ENCODE measurements at regions of chr6 and their contacts with region 1.

Region 1: DNA sequence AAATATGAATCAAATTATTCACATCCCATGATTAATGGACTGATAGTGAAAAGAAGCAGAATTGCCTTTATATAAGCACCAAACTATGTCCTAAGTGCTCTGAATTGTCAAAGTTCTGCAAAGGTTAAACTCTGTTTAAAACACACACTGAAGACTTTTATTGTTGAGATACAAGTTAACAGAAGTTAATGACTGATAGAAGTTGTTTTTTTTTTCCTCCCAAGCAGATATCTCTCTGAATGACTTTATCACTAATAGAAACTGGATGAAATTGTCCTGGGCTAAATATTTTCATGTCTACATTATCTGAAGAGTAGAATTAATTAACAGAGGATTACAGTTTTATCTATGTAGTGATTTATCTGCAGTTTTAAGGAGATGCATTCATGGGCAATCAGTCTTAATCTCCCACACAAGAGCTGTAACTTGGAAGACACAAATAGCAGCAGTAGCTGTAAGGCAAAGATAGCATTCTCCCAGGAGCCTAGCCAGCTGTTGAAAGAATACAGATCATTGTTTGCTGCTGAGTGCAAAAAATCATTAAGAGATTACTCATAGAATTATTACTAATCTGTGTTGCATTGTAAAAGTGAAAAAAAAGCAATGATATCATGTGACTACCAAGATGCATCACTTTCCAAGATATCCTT is 49.9 kb downstream of the BMP5 start:
- DNase-seq: peak; percentile 12 to 32
- H3K4me3 ChIP-seq: no peak overlapping the region
- H3K4me3 Mint-ChIP-seq: no peak overlapping the region
- H3K27ac Mint-ChIP-seq: no peak overlapping the region
- H3K4me1 ChIP-seq: peaks cover 28% of the 10 kb centered on the region
- H3K4me1 Mint-ChIP-seq: peaks cover 14% of the 10 kb centered on the region
- H3K27me3 ChIP-seq: no peaks in the 10 kb centered on the region
- H3K27me3 Mint-ChIP-seq: no peaks in the 10 kb centered on the region
- CTCF ChIP-seq: no peak

Region 2: DNA sequence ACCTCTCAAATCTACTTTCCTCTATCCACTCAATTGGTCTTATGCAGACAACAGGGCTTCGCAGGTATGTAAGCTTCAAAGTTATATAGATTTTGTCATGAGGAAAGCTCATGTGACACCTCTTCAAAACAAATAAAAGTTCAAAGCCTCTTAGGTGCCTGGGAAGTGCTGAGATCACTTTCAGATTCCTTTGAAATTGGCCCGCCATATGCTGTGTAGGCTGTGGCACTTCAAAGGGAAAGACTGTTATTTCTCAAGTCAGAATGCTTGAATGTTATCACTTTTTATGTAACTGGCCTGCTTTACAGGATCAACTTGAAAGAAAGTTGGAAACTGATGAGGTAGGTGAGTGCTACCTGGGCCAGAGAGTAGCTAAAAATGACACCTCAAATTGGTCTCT is 565.3 kb before region 1 on chr6:
- CTCF ChIA-PET with region 1: no interaction called
- POLR2A ChIA-PET with region 1: no interaction called
- intact Hi-C with region 1: loop called (anchors 5 kb)
- DNase-seq: peak; percentile 76 to 78
- H3K4me3 ChIP-seq: no peak overlapping the region
- H3K4me3 Mint-ChIP-seq: peak overlapping the region; percentile 47
- H3K27ac Mint-ChIP-seq: peak overlapping the region; percentile 78
- H3K4me1 ChIP-seq: peaks cover 41% of the 10 kb centered on the region
- H3K4me1 Mint-ChIP-seq: peaks cover 10% of the 10 kb centered on the region
- H3K27me3 ChIP-seq: no peaks in the 10 kb centered on the region
- H3K27me3 Mint-ChIP-seq: no peaks in the 10 kb centered on the region
- CTCF ChIP-seq: no peak

Region 3: GRCh38 chr6:55543633-55544309 is 281.8 kb before region 1 on chr6:
- CTCF ChIA-PET with region 1: no interaction called
- POLR2A ChIA-PET with region 1: no interaction called
- intact Hi-C with region 1: loop called (anchors 5 kb)
- DNase-seq: peak in 1 of 2 experiments; percentile 20
- H3K4me3 ChIP-seq: no peak overlapping the region
- H3K4me3 Mint-ChIP-seq: no peak overlapping the region
- H3K27ac Mint-ChIP-seq: no peak overlapping the region
- H3K4me1 ChIP-seq: peaks cover 28% of the 10 kb centered on the region
- H3K4me1 Mint-ChIP-seq: peaks cover 10% of the 10 kb centered on the region
- H3K27me3 ChIP-seq: no peaks in the 10 kb centered on the region
- H3K27me3 Mint-ChIP-seq: no peaks in the 10 kb centered on the region
- CTCF ChIP-seq: peak; percentile 16 to 31

Region 4: GRCh38 chr6:55621244-55621643 is 204.3 kb before region 1 on chr6:
- CTCF ChIA-PET with region 1: no interaction called
- POLR2A ChIA-PET with region 1: no interaction called
- intact Hi-C with region 1: no loop called
- DNase-seq: no peak
- H3K4me3 ChIP-seq: no peak overlapping the region
- H3K4me3 Mint-ChIP-seq: no peak overlapping the region
- H3K27ac Mint-ChIP-seq: no peak overlapping the region
- H3K4me1 ChIP-seq: no peaks in the 10 kb centered on the region
- H3K4me1 Mint-ChIP-seq: no peaks in the 10 kb centered on the region
- H3K27me3 ChIP-seq: no peaks in the 10 kb centered on the region
- H3K27me3 Mint-ChIP-seq: no peaks in the 10 kb centered on the region
- CTCF ChIP-seq: no peak

Region 5: DNA sequence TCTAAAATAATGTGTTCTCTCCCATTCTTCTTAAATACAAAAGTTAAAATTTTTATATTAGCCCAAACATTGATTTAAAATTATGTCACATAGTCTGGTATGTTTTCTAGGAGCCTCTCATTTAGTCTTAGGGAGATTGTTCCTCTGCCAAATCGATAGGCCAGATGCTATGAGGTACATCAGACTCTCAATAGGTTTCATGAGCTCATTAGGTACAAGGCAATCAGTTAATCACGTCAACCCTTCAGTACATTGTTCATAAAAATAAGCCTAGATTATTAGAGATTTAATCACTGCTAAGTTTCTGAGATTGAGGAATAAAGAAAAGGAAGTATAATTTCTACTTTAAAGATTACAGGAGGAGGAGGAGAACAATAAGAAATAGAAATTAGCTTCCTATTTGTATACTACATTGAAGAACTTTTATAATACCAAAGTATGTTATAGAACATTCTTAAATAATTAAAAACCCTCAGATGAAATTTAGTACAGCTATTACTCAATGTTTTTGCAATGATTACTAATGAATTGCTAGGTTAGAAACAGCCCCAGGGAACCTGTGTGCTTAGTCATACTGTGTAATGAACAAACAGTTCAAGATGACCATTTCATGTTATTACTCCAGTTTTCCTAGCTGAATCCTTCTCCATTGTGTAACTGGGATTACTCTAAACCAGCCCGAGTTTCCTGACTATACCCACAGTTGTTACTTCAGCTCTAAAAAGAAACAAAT is 67.2 kb before region 1 on chr6:
- CTCF ChIA-PET with region 1: no interaction called
- POLR2A ChIA-PET with region 1: no interaction called
- intact Hi-C with region 1: no loop called
- DNase-seq: peak in 1 of 2 experiments; percentile 10
- H3K4me3 ChIP-seq: no peak overlapping the region
- H3K4me3 Mint-ChIP-seq: no peak overlapping the region
- H3K27ac Mint-ChIP-seq: no peak overlapping the region
- H3K4me1 ChIP-seq: no peaks in the 10 kb centered on the region
- H3K4me1 Mint-ChIP-seq: peaks cover 8% of the 10 kb centered on the region
- H3K27me3 ChIP-seq: no peaks in the 10 kb centered on the region
- H3K27me3 Mint-ChIP-seq: no peaks in the 10 kb centered on the region
- CTCF ChIP-seq: no peak

Region 6: DNA sequence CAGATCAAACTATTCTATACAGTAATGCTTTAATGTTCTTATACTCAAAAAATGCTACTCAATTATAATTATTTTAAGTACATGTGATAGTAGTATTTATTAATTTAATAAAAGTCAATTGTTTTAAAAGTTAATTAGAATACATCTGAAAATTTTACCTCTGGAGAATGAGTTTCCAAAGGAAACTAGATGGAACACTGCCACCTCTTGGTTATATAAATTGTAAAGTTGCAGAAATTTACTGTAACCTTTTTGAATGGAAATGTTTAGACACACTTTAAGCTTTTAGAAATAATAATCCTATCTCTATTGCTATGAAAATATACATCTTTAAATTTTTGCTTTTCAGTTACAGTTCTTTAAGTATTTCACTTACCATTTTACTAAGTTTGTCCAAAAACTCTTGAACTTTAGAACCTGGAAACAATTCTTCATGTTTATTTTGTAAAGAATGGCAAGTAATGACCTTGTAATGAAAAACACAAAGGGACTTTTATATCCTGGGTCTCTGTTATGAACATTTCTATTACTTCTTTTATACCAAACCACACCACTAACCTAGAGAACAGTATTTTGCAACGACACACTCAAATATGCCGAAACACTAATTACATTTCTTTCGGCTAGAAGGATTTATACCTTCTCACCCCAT is 60.8 kb after region 1 on chr6:
- CTCF ChIA-PET with region 1: no interaction called
- POLR2A ChIA-PET with region 1: no interaction called
- intact Hi-C with region 1: loop called (anchors 5 kb)
- DNase-seq: no peak
- H3K4me3 ChIP-seq: no peak overlapping the region
- H3K4me3 Mint-ChIP-seq: no peak overlapping the region
- H3K27ac Mint-ChIP-seq: no peak overlapping the region
- H3K4me1 ChIP-seq: peaks cover 11% of the 10 kb centered on the region
- H3K4me1 Mint-ChIP-seq: peaks cover 4% of the 10 kb centered on the region
- H3K27me3 ChIP-seq: no peaks in the 10 kb centered on the region
- H3K27me3 Mint-ChIP-seq: no peaks in the 10 kb centered on the region
- CTCF ChIP-seq: peak; percentile 29 to 35